Left ventricle myocardium inferior (tissue), 1 donor: ENCODE measurements at regions of chr11 and their contacts with region 1.

Region 1: DNA sequence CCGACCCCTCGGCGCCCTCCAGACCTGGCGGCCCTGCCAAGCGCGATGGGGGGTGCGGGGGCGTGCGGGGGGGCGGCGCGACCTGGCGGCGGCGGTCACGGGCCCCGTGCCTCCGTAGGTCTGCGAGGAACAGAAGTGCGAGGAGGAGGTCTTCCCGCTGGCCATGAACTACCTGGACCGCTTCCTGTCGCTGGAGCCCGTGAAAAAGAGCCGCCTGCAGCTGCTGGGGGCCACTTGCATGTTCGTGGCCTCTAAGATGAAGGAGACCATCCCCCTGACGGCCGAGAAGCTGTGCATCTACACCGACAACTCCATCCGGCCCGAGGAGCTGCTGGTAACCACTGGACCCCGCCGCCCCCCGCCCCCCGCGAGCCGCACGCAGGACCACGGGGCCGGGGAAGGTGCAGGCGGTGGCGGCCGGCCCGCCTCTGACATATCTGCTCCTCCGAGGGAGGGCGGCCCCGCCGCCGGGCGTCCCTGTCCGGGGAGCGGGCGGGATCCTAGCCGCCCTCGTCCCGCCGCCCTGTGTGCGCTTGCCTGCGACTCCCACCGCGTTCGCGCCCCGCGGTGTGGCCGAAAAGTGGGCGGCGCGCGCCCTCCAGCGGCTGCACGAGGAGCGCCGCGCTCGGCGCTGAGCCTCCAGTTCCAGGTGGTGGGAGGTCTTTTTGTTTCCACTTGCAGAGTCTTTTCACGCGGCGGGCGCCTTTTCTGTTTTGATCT is 2.1 kb downstream of the CCND1 start:
- DNase-seq: peak; percentile 82
- H3K4me3 ChIP-seq: peak overlapping the region; percentile 96
- H3K27ac ChIP-seq: peak overlapping the region; percentile 99
- H3K4me1 ChIP-seq: peaks cover 97% of the 10 kb centered on the region
- H3K27me3 ChIP-seq: peaks cover 3% of the 10 kb centered on the region
- CTCF ChIP-seq: peak; percentile 94

Region 2: GRCh38 chr11:69101115-69101791 is 541.8 kb before region 1 on chr11:
- intact Hi-C with region 1: loop called (anchors 5 kb)
- DNase-seq: peak; percentile 74
- H3K4me3 ChIP-seq: no peak overlapping the region
- H3K27ac ChIP-seq: no peak overlapping the region
- H3K4me1 ChIP-seq: peaks cover 21% of the 10 kb centered on the region
- H3K27me3 ChIP-seq: no peaks in the 10 kb centered on the region
- CTCF ChIP-seq: peak; percentile 100

Region 3: GRCh38 chr11:69296890-69297786 is 345.9 kb before region 1 on chr11:
- intact Hi-C with region 1: loop called (anchors 5 kb)
- DNase-seq: peak; percentile 94
- H3K4me3 ChIP-seq: peak overlapping the region; percentile 45
- H3K27ac ChIP-seq: peak overlapping the region; percentile 93
- H3K4me1 ChIP-seq: peaks cover 87% of the 10 kb centered on the region
- H3K27me3 ChIP-seq: no peaks in the 10 kb centered on the region
- CTCF ChIP-seq: no peak